ENCODE measurements at regions of chr2 and their contacts with region 1.

Region 1: GRCh38 chr2:667332-667999 is 9.7 kb downstream of the TMEM18 start:
- DNase-seq: peak in 2 of 14 experiments; percentile 11 to 40
- ATAC-seq: peak; percentile 79
- H3K4me3 ChIP-seq: no peak overlapping the region
- H3K4me3 Mint-ChIP-seq: no peak overlapping the region
- H3K27ac ChIP-seq: no peak overlapping the region
- H3K27ac Mint-ChIP-seq: no peak overlapping the region
- H3K4me1 ChIP-seq: peaks cover 4% of the 10 kb centered on the region
- H3K4me1 Mint-ChIP-seq: peaks cover 20% of the 10 kb centered on the region
- H3K27me3 ChIP-seq: no peaks in the 10 kb centered on the region
- H3K27me3 Mint-ChIP-seq: no peaks in the 10 kb centered on the region
- CTCF ChIP-seq: peak; percentile 42

Region 2: GRCh38 chr2:166381-166780 is 501.1 kb before region 1 on chr2:
- CTCF ChIA-PET with region 1: no interaction called
- POLR2A ChIA-PET with region 1: no interaction called
- intact Hi-C with region 1: no loop called
- DNase-seq: peak in 2 of 14 experiments; percentile 13 to 24
- ATAC-seq: peak; percentile 21
- H3K4me3 ChIP-seq: no peak overlapping the region
- H3K4me3 Mint-ChIP-seq: no peak overlapping the region
- H3K27ac ChIP-seq: no peak overlapping the region
- H3K27ac Mint-ChIP-seq: no peak overlapping the region
- H3K4me1 ChIP-seq: peaks cover 9% of the 10 kb centered on the region
- H3K4me1 Mint-ChIP-seq: peaks cover 20% of the 10 kb centered on the region
- H3K27me3 ChIP-seq: no peaks in the 10 kb centered on the region
- H3K27me3 Mint-ChIP-seq: peaks cover 15% of the 10 kb centered on the region
- CTCF ChIP-seq: no peak

Region 3: DNA sequence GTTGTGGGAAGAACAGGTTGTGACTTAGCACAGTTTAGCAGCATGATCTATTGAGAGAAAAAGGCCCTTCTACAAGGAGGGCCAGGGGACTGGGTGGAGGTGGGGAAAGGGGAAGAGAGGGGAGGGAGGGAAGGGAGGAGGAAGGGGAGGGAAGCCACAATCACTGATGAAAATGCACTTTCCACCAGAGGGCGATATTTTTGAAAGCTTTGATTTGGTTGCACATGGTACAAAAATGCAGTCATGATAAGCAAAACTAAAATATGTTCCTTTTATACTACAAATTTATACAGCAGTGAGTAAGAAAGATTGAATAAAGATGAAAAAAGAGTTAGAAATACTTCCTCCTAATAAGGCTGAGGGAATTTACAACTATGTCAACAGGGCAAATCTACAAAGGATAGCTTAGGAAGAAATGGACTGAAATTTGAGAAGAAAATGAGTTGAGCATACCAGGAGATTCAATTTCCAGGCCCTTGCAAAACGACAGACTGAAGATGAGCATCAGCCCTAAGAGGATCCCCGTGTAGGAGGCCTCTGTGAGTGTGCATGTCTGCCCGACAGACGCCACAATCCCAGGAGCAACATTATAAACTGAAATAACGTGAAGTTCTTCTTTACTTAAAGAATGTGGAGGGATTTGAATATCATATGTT is 420.8 kb before region 1 on chr2:
- CTCF ChIA-PET with region 1: no interaction called
- POLR2A ChIA-PET with region 1: no interaction called
- intact Hi-C with region 1: loop called in 1 of 2 experiments (anchors 1 kb)
- DNase-seq: peak in 9 of 14 experiments; percentile 5 to 75 (median 14)
- ATAC-seq: peak; percentile 60
- H3K4me3 ChIP-seq: no peak overlapping the region
- H3K4me3 Mint-ChIP-seq: no peak overlapping the region
- H3K27ac ChIP-seq: no peak overlapping the region
- H3K27ac Mint-ChIP-seq: no peak overlapping the region
- H3K4me1 ChIP-seq: no peaks in the 10 kb centered on the region
- H3K4me1 Mint-ChIP-seq: peaks cover 7% of the 10 kb centered on the region
- H3K27me3 ChIP-seq: no peaks in the 10 kb centered on the region
- H3K27me3 Mint-ChIP-seq: no peaks in the 10 kb centered on the region
- CTCF ChIP-seq: peak; percentile 79

Region 4: DNA sequence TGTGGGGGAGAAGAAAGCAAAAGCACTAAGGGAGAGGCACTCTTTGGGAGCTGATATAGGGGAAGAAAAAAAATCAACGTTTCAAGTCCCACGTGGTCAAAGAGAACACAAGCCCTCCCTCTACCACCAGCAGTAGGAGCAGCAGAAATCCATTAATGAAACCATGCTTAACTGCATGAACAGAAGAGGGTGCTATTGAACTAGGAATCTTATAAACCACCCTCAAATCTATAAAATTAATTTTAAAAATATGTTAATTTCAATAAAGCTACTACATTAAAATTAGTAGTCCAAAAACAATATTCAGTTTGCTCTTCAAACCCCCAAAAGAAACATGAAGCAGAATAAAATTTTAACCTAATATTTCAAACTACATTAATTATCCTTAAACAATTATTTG is 138.0 kb before region 1 on chr2:
- CTCF ChIA-PET with region 1: no interaction called
- POLR2A ChIA-PET with region 1: no interaction called
- intact Hi-C with region 1: loop called in 1 of 2 experiments (anchors 1 kb)
- DNase-seq: peak in 3 of 14 experiments; percentile 38 to 48 (median 46)
- ATAC-seq: peak; percentile 26
- H3K4me3 ChIP-seq: no peak overlapping the region
- H3K4me3 Mint-ChIP-seq: no peak overlapping the region
- H3K27ac ChIP-seq: no peak overlapping the region
- H3K27ac Mint-ChIP-seq: no peak overlapping the region
- H3K4me1 ChIP-seq: no peaks in the 10 kb centered on the region
- H3K4me1 Mint-ChIP-seq: no peaks in the 10 kb centered on the region
- H3K27me3 ChIP-seq: peaks cover 3 to 6% of the 10 kb centered on the region in 2 experiments
- H3K27me3 Mint-ChIP-seq: peaks cover 14% of the 10 kb centered on the region
- CTCF ChIP-seq: peak; percentile 41

Region 5: DNA sequence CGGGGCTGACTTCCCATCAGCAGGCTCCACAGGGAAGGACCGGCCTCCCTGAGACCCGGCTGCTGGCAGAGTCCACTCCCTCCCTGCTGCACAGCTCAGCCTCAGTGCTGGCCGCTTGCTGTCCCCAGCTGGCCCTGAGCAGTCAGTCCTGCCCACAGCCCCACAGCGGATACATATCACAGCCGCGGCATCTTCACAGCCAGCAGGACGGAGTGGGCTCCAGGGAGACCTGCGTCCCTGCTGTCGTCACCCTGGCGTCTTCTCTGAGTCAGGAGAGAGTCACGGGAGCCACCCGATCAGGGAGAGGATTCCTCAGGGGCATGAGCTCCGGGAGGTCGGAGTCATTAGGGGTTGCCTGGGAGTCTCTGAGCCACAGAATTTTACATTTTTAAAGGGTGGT is 270.1 kb after region 1 on chr2:
- CTCF ChIA-PET with region 1: no interaction called
- POLR2A ChIA-PET with region 1: no interaction called
- intact Hi-C with region 1: no loop called
- DNase-seq: no peak
- ATAC-seq: no peak
- H3K4me3 ChIP-seq: no peak overlapping the region
- H3K4me3 Mint-ChIP-seq: no peak overlapping the region
- H3K27ac ChIP-seq: no peak overlapping the region
- H3K27ac Mint-ChIP-seq: no peak overlapping the region
- H3K4me1 ChIP-seq: no peaks in the 10 kb centered on the region
- H3K4me1 Mint-ChIP-seq: no peaks in the 10 kb centered on the region
- H3K27me3 ChIP-seq: no peaks in the 10 kb centered on the region
- H3K27me3 Mint-ChIP-seq: no peaks in the 10 kb centered on the region
- CTCF ChIP-seq: no peak

Measured in CD4-positive, alpha-beta T cell (primary cell).